ENCODE measurements at regions of chr6 and their contacts with region 1.

Region 1: GRCh38 chr6:128327890-128328289 is 192.5 kb downstream of the PTPRK start:
- DNase-seq: no peak
- H3K4me3 ChIP-seq: no peak overlapping the region
- H3K27ac ChIP-seq: no peak overlapping the region
- H3K4me1 ChIP-seq: no peaks in the 10 kb centered on the region
- H3K27me3 ChIP-seq: no peaks in the 10 kb centered on the region
- CTCF ChIP-seq: peak; percentile 35 to 37
- POLR2A ChIP-seq: no peak

Region 2: DNA sequence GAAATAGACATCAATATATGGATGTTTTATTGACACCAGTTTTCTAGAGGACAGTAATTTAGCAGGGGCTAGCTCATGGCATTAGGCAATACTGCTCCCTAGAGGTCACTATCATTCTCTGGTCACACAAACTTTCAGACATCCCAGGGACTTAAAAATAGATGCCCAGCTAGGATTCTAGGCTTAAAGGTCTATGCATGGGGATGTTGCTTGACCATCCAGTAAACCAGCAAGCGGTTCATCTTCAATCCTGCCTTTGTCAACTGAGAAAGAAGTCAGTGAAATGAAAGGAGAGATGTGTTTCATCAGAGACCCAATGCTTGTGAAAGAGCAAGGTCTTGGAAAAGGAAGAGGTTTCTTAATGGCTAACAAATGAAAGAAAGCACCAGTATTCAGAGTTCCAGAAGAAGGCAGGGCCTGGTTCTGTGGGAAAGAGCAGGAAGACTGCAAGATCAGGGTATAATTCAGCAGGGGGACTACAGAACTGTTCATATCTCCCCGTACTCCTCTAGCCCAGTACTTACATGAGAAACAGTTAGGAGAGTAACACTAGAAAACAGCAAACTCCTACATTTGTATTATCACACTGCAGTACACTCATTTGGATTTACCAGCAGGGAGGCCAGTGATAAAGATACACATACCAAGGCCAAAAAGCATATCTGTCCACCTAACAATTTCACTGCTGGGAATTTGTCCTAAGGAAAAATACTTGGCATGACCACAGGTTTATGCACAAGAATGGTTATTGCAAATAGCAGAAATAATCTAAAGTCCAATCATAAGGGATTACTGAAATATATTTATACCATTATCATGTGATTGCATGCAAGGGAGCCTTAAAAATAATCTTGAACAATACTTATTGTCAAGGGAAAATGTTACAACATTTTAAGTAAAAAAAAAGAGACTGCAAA is 403.6 kb after region 1 on chr6:
- CTCF ChIA-PET with region 1: interaction called, 4 read pairs
- POLR2A ChIA-PET with region 1: no interaction called
- dilution Hi-C with region 1: no loop called
- intact Hi-C with region 1: loop called (anchors 10 kb)
- DNase-seq: peak; percentile 69
- H3K4me3 ChIP-seq: no peak overlapping the region
- H3K27ac ChIP-seq: no peak overlapping the region
- H3K4me1 ChIP-seq: no peaks in the 10 kb centered on the region
- H3K27me3 ChIP-seq: peaks cover 0 to 5% of the 10 kb centered on the region in 2 experiments
- CTCF ChIP-seq: peak; percentile 51 to 68
- POLR2A ChIP-seq: no peak